ENCODE measurements at regions of chr6 and their contacts with region 1.

Region 1: DNA sequence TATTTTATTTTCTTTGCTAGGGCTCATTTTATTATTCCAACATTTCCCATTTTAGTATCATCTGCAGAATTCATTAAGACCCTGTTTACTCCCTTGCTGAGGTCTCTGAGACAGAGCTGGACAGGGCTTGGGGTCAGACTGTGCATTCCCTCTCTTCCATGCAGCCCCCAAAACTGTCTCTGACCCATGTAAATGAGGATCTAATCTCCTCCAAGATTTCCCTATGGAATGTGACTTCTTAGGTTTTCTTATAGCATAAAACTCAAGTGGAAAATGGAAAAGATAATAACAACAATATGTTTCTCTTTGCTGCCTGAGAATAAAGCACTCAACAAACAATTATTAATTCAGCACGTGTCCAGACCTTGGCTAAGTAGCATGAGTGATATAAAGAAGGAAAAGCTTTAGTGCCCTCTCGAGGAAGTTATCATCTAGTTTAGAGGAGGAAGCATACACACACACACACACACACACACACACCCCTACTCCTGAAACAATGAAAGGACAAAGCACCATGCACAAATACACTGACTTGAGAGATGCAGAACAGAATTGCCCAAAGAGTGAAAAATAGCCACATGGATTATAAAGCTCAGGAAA is 815.5 kb downstream of the BCKDHB start:
- DNase-seq: peak; percentile 27
- ATAC-seq: peak; percentile 33; the same call in 1 of the 2 replicates
- H3K4me3 ChIP-seq: no peak overlapping the region
- H3K27ac ChIP-seq: no peak overlapping the region
- H3K4me1 ChIP-seq: no peaks in the 10 kb centered on the region
- H3K27me3 ChIP-seq: no peaks in the 10 kb centered on the region
- CTCF ChIP-seq: no peak; the same call in 1 of the 2 replicates

Region 2: GRCh38 chr6:80742481-80742880 is 179.5 kb before region 1 on chr6:
- CTCF ChIA-PET with region 1: no interaction called
- POLR2A ChIA-PET with region 1: no interaction called
- intact Hi-C with region 1: loop called (anchors 5 kb)
- DNase-seq: peak; percentile 45
- ATAC-seq: peak; percentile 49
- H3K4me3 ChIP-seq: no peak overlapping the region
- H3K27ac ChIP-seq: no peak overlapping the region
- H3K4me1 ChIP-seq: no peaks in the 10 kb centered on the region
- H3K27me3 ChIP-seq: no peaks in the 10 kb centered on the region
- CTCF ChIP-seq: peak; percentile 56

Region 3: DNA sequence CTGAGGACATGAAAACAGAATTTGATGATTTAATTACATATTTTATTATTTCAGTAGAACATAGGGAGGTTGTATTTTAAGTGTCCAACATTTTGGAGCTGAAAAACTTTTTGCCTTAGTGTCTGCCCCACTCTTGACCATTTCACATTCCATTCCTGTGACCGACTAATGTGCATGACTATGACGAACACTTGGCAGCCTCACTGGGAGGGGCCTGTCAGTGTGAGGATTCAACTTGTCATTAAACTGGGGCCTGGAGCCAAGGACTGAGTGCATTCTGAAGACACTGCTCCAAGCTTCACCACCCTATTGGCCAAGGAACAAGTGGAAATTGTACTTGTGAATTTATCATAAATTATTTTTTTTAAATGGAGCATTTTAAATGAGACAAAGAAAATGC is 154.2 kb before region 1 on chr6:
- CTCF ChIA-PET with region 1: no interaction called
- POLR2A ChIA-PET with region 1: no interaction called
- intact Hi-C with region 1: loop called (anchors 10 kb)
- DNase-seq: peak; percentile 75
- ATAC-seq: peak; percentile 59
- H3K4me3 ChIP-seq: no peak overlapping the region
- H3K27ac ChIP-seq: no peak overlapping the region
- H3K4me1 ChIP-seq: peaks cover 14% of the 10 kb centered on the region; the same call in 1 of the 2 replicates
- H3K27me3 ChIP-seq: no peaks in the 10 kb centered on the region
- CTCF ChIP-seq: no peak

Region 4: GRCh38 chr6:80976336-80976735 is 54.4 kb after region 1 on chr6:
- CTCF ChIA-PET with region 1: no interaction called
- POLR2A ChIA-PET with region 1: no interaction called
- intact Hi-C with region 1: no loop called
- DNase-seq: no peak
- ATAC-seq: no peak
- H3K4me3 ChIP-seq: no peak overlapping the region
- H3K27ac ChIP-seq: no peak overlapping the region
- H3K4me1 ChIP-seq: no peaks in the 10 kb centered on the region
- H3K27me3 ChIP-seq: no peaks in the 10 kb centered on the region
- CTCF ChIP-seq: no peak